Heart left ventricle (tissue), 16 donors: ENCODE measurements at regions of chr5 and their contacts with region 1.

Region 1: GRCh38 chr5:91998774-91999173 is 615.7 kb upstream of the ARRDC3 start:
- DNase-seq: no peak
- ATAC-seq: no peak
- H3K4me3 ChIP-seq: no peak overlapping the region
- H3K27ac ChIP-seq: no peak overlapping the region
- H3K4me1 ChIP-seq: no peaks in the 10 kb centered on the region
- H3K27me3 ChIP-seq: no peaks in the 10 kb centered on the region
- CTCF ChIP-seq: no peak
- POLR2A ChIP-seq: no peak

Region 2: DNA sequence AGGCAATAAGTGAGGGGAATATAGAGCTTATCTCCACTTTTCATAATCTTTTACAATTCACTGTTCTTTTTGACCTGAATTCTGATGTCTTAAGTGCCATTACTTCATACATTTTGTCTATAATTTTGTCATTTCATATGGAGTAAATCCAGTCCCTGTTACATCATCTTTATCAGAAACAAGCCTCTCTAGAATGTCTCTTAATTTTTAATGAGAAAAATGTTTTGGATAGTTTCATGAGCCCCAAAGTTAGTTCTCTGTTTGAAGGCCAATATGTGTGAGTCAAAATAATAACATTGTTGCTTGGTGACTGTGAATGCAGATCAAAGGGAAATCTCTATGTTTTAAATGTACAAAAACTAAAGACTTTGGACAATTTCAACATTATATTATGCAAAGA is 286.1 kb before region 1 on chr5:
- intact Hi-C with region 1: no loop called
- DNase-seq: no peak
- ATAC-seq: no peak
- H3K4me3 ChIP-seq: no peak overlapping the region
- H3K27ac ChIP-seq: no peak overlapping the region
- H3K4me1 ChIP-seq: no peaks in the 10 kb centered on the region
- H3K27me3 ChIP-seq: no peaks in the 10 kb centered on the region
- CTCF ChIP-seq: no peak
- POLR2A ChIP-seq: no peak

Region 3: DNA sequence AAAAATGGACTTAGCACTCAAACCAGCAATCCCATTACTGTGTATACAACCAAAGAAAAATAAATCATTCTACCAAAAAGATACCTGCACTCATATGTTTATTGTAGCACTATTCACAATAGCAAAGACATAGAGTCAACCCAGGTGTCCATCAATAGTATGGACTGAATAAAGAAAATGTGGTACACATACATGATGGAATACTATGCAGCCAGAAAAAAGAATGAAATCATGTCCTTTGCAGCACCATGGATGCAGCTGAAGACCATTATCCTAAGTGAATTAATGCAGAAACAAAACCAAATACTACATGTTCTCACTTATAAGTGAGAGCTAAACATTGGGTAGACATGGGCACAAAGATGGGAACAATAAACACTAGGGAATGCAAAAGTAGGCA is 1979.4 kb after region 1 on chr5:
- intact Hi-C with region 1: loop called in 1 of 10 experiments (anchors 10 kb)
- DNase-seq: no peak
- ATAC-seq: no peak
- H3K4me3 ChIP-seq: no peak overlapping the region
- H3K27ac ChIP-seq: no peak overlapping the region
- H3K4me1 ChIP-seq: no peaks in the 10 kb centered on the region
- H3K27me3 ChIP-seq: no peaks in the 10 kb centered on the region
- CTCF ChIP-seq: no peak
- POLR2A ChIP-seq: no peak